K562 (cell line): ENCODE measurements at regions of chr22 and their contacts with region 1.

Region 1: DNA sequence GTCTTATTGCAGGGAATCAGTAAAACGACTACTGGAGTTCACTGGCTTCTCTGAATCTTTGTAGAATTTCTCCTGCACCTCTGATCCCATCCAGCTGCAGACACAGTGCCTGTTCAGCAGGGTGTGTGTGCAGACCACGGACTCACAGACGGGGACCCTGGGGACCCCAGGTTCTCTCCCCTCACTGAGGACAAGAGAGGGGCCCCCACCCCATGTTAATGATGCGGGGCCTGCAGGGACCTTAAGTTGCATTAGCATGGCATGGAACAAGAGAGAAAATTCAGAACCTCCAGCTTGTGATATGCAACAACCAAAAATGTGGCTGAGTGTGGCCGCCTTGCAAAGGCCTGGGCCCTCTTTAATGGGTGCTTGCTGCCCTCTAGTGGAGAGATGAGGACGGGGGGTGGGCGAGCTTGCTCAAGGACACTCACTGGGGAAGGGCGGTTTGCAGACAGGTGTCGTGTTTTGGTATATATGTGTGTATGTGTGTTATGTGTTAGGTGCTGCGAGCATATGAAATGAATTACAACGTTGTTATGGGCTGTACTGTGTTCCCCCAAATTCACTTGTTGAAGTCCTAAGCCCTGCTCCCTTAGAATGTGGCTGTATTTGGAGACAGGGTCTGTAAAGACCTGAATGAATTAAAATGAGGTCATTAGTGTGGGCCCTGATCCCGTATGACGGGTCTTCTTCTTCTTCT is 84.4 kb upstream of the SEPTIN5 start:
- DNase-seq: peak; percentile 98 to 100 (median 100)
- ATAC-seq: peak; percentile 89
- H3K4me3 ChIP-seq: no peak overlapping the region
- H3K27ac ChIP-seq: no peak overlapping the region
- H3K4me1 ChIP-seq: peaks cover 15 to 27% of the 10 kb centered on the region in 2 experiments; a peak in 4 of 5 replicates
- H3K27me3 ChIP-seq: peaks cover 2 to 20% of the 10 kb centered on the region in 2 experiments; a peak in 4 of 5 replicates
- CTCF ChIP-seq: peak; percentile 99 to 100 (median 99)
- EP300 ChIP-seq: peak; percentile 48; the same call in 1 of the 2 replicates
- POLR2A ChIP-seq: no peak
- RAD21 ChIP-seq: peak; percentile 100

Region 2: DNA sequence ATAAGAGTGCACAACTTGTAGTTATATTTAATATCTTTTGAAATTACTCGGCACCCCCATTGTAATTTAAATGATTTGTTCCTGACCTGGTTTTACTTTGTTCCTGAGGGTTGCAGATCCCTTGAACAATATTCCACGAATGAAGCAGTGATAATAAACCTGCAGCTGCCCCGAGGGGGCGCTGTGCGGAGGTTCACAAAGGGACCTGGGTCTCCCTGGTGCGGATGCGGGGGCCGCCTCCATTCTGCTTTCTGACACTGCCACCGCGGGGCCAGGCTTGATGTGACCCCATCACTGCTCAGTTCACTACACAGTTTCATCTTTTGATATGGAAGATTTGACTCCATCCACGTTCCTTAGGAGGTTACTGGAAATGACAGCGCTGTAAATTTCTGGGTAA is 630.9 kb before region 1 on chr22:
- CTCF ChIA-PET with region 1: interaction called, 3 read pairs
- POLR2A ChIA-PET with region 1: no interaction called
- in situ Hi-C with region 1: no loop called
- intact Hi-C with region 1: loop called (anchors 1 kb)
- DNase-seq: peak; percentile 80 to 94 (median 86)
- ATAC-seq: peak; percentile 91
- H3K4me3 ChIP-seq: no peak overlapping the region
- H3K27ac ChIP-seq: no peak overlapping the region
- H3K4me1 ChIP-seq: peaks cover 0 to 7% of the 10 kb centered on the region in 2 experiments; a peak in 1 of 5 replicates
- H3K27me3 ChIP-seq: peaks cover 70 to 72% of the 10 kb centered on the region in 2 experiments
- CTCF ChIP-seq: peak; percentile 96 to 99 (median 98)
- EP300 ChIP-seq: 0 out of 2 replicates have a peak, but pooled peaks have one; percentile 11
- POLR2A ChIP-seq: no peak
- RAD21 ChIP-seq: peak in 1 of 2 experiments; percentile 76; a peak in 2 of 4 replicates

Region 3: DNA sequence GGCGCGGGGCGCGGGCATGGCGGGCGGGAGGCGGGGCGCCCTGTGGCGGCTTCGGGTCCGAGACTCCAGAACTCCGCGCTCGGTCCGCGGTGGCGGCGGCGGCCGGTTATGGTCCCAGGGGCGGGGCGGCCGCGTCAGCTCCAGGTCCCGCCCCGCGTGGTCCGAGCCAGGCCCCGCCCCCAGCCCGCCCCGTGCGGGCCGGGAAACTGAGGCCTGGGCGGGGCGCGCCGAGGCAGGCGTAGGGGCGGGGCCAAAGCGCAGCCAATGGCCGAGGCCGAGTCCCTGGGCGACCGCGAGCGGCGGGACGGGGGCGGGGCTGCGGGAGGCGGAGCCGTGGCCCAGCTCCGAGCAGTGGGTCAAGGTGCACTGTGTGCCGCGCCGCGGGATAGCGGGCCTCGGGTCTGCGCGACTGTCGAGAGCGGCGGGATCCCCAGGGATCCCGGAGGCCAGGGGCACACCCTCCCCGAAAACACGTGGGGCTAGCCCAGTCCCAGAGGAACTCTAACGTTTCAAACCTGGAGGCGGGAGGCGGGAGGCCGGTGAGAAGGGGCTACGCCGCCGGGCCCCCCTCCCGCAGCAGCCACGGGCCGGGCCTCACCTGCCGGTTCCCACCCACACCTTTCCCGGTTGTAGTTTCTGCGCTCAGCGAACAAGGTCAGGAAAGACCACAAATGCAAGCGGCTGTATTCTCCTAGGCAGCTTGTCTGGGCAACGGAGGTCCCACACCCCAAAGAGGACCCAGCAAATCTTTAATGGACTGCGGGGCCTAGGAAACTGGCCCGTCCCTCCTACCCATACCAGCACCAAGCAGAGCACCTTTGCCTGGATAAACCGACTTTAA is 451.0 kb before region 1 on chr22 and contains the start of gene SLC25A1:
- CTCF ChIA-PET with region 1: interaction called, 31 read pairs
- POLR2A ChIA-PET with region 1: interaction called, 4 read pairs
- in situ Hi-C with region 1: loop called (anchors 5 kb)
- intact Hi-C with region 1: loop called (anchors 1 kb)
- DNase-seq: peak; percentile 100
- ATAC-seq: peak; percentile 86
- H3K4me3 ChIP-seq: peak within 1 kb of the TSS; percentile 76
- H3K27ac ChIP-seq: peak within 1 kb of the TSS; percentile 85
- H3K4me1 ChIP-seq: peaks cover 31 to 89% of the 10 kb centered on the region in 2 experiments
- H3K27me3 ChIP-seq: peaks cover 10 to 22% of the 10 kb centered on the region in 2 experiments; a peak in 4 of 5 replicates
- CTCF ChIP-seq: no peak
- EP300 ChIP-seq: no peak
- POLR2A ChIP-seq: no peak
- RAD21 ChIP-seq: no peak
- polyA plus RNA-seq, gene SLC25A1: 11.0 to 23.7 TPM

Region 4: DNA sequence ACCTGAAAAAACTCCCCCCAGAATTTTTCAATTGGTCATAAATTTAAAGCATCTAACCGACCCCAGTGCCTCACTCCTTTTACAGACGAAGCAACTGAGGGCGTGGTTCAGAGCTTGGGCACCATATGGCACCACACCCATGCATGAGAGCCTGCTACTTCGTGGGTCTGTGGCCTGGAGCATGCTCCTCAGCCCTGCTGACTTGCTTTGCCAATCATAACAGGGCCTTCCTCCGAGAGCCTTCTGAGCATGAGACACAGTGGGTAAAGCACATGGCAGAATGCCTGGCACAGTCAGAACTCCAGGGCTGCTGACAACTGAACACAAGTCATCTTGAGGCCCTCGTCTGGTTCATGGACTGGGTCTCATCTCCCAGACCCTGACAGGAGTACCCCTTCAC is 231.7 kb before region 1 on chr22:
- CTCF ChIA-PET with region 1: interaction called, 3 read pairs
- POLR2A ChIA-PET with region 1: interaction called, 3 read pairs
- in situ Hi-C with region 1: no loop called
- intact Hi-C with region 1: loop called (anchors 10 kb)
- DNase-seq: no peak
- ATAC-seq: no peak
- H3K4me3 ChIP-seq: no peak overlapping the region
- H3K27ac ChIP-seq: peak overlapping the region; percentile 73
- H3K4me1 ChIP-seq: peaks cover 31 to 33% of the 10 kb centered on the region in 2 experiments
- H3K27me3 ChIP-seq: no peaks in the 10 kb centered on the region
- CTCF ChIP-seq: no peak
- EP300 ChIP-seq: no peak
- POLR2A ChIP-seq: no peak
- RAD21 ChIP-seq: no peak; a peak in 1 of 4 replicates

Region 5: DNA sequence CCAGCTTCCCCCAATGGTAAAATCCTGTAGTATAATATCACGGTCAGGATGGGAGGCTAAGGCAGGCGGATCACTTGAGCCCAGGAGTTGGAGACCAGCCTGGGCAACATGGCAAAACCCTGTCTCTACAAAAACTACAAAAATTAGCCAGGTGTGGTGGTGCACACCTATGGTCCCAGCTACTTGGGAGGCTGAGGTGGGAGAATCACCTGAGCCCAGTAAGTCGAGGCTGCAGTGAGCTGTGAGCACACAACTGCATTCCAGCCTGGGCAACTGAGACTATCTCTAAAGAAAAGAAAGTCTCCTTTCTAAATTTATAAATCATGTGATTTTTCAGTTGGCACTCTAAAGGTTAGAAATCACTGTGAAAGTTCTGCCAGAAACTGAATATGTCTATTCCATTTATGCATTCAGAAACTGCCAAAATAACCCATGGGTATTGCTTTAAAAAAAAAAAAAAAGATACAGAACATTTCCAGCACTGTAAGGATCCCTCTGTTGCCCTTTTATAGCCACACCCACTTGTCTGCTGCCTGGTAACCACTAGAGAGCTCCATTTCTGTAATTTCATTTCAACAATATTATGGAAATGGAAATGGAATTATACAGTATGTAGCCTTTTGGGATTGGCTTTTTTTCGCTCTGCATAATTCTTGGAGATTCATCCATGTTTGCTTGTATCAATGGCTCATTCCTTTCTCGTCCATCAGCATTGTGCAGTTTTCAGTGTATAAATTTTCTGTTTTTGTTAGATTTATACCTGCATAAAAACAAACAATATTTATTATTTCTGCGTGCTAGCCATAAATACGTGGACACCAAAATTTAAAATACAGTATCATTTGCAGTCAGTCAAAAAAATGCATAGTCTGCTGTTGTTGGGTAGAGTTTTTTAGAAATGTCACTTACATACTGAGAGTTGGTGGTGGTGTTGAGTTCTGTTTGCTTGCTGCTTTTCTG is 140.7 kb before region 1 on chr22:
- CTCF ChIA-PET with region 1: interaction called, 14 read pairs
- POLR2A ChIA-PET with region 1: interaction called, 5 read pairs
- in situ Hi-C with region 1: no loop called
- intact Hi-C with region 1: no loop called
- DNase-seq: peak in 3 of 4 experiments; percentile 57 to 84 (median 83)
- ATAC-seq: peak; percentile 75
- H3K4me3 ChIP-seq: no peak overlapping the region
- H3K27ac ChIP-seq: no peak overlapping the region
- H3K4me1 ChIP-seq: no peaks in the 10 kb centered on the region
- H3K27me3 ChIP-seq: no peaks in the 10 kb centered on the region
- CTCF ChIP-seq: peak in 2 of 3 experiments; percentile 33 to 63; a peak in 2 of 6 replicates
- EP300 ChIP-seq: no peak
- POLR2A ChIP-seq: 0 out of 2 replicates have a peak, but pooled peaks have one; percentile 48
- RAD21 ChIP-seq: peak; percentile 33 to 57

Region 6: DNA sequence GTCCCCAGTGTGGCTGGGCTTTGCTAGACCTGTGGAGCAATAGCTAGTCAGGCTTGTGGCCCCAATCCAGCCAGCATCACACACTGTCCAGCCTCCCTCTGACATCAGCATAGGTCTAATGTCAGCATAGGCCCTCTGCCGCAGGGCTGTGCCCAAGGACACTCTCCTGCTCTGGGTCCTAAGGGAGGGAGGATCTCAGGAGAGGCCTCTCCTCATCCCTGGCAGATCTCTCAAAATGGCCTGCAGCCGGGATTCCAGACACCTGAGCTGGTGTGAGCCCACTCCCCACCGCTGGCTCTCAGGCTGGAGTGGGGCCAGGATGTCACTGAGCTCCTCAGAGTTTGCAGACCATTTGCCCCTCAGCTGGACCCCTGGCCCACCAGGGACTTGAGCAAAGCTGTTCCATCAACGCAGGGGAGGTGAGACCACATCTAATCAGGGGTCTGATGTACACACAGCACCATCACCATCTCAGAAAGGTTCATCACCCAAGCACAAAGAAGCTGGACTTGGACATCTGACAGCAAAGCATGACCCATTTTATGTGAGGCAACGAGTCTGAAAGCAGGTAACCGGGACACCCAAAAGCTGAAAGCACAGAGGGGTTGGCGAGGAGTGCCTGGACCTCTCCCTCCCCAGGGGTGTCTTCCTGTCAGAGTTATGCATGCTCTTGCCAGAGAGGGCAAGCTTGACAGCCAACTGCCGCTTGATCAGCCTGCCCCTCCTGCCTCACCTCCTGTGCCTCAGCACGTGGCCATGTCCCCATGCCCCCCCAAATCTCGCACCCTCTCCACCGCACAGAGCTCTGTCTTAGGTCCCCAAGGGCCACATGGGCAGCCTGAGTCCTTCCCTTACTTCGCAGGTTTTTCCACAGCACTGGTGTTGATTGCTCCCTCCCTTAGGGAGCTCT is 14.7 kb after region 1 on chr22:
- CTCF ChIA-PET with region 1: interaction called, 8 read pairs
- POLR2A ChIA-PET with region 1: interaction called, 19 read pairs
- in situ Hi-C with region 1: no loop called
- intact Hi-C with region 1: no loop called
- DNase-seq: peak; percentile 70 to 79 (median 73)
- ATAC-seq: peak; percentile 75
- H3K4me3 ChIP-seq: no peak overlapping the region
- H3K27ac ChIP-seq: peak overlapping the region; percentile 12; the same call in 2 of the 3 replicates
- H3K4me1 ChIP-seq: peaks cover 35 to 37% of the 10 kb centered on the region in 2 experiments; a peak in 4 of 5 replicates
- H3K27me3 ChIP-seq: peaks cover 0 to 6% of the 10 kb centered on the region in 2 experiments; a peak in 1 of 5 replicates
- CTCF ChIP-seq: peak in 1 of 3 experiments; percentile 15; a peak in 1 of 6 replicates
- EP300 ChIP-seq: no peak
- POLR2A ChIP-seq: no peak
- RAD21 ChIP-seq: 0 out of 4 replicates have a peak, but pooled peaks of 1 of the 2 experiments have one; percentile 3